ENCODE measurements at regions of chr13 and their contacts with region 1.

Region 1: DNA sequence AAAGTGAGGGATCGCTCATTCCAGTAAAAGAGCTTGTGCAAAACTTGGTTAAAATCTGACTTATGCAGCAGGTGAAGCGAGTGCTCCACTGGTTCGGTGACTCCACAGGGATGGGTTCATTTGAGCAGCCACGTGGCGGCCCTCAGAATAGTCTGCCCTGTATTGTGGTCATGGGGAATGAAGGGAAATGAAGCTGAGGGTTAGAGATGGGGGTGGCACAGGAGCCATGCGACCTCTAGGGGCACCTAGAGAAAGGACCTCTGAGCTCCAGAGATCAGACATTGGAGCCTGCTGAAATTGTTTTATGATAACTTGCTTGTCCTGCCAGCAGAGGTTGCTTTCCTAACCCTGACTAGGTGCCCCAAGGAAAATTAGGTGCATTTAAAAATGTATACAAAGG is 26.6 kb downstream of the CBY2 start:
- DNase-seq: peak in 1 of 14 experiments; percentile 1
- ATAC-seq: no peak
- H3K4me3 ChIP-seq: no peak overlapping the region
- H3K4me3 Mint-ChIP-seq: no peak overlapping the region
- H3K27ac ChIP-seq: no peak overlapping the region
- H3K27ac Mint-ChIP-seq: no peak overlapping the region
- H3K4me1 ChIP-seq: no peaks in the 10 kb centered on the region
- H3K4me1 Mint-ChIP-seq: no peaks in the 10 kb centered on the region
- H3K27me3 ChIP-seq: no peaks in the 10 kb centered on the region
- H3K27me3 Mint-ChIP-seq: no peaks in the 10 kb centered on the region
- CTCF ChIP-seq: no peak

Region 2: GRCh38 chr13:45748941-45749759 is 20.4 kb after region 1 on chr13:
- CTCF ChIA-PET with region 1: no interaction called
- POLR2A ChIA-PET with region 1: no interaction called
- intact Hi-C with region 1: no loop called
- DNase-seq: no peak
- ATAC-seq: no peak
- H3K4me3 ChIP-seq: no peak overlapping the region
- H3K4me3 Mint-ChIP-seq: no peak overlapping the region
- H3K27ac ChIP-seq: no peak overlapping the region
- H3K27ac Mint-ChIP-seq: no peak overlapping the region
- H3K4me1 ChIP-seq: no peaks in the 10 kb centered on the region
- H3K4me1 Mint-ChIP-seq: no peaks in the 10 kb centered on the region
- H3K27me3 ChIP-seq: no peaks in the 10 kb centered on the region
- H3K27me3 Mint-ChIP-seq: no peaks in the 10 kb centered on the region
- CTCF ChIP-seq: no peak

Region 3: DNA sequence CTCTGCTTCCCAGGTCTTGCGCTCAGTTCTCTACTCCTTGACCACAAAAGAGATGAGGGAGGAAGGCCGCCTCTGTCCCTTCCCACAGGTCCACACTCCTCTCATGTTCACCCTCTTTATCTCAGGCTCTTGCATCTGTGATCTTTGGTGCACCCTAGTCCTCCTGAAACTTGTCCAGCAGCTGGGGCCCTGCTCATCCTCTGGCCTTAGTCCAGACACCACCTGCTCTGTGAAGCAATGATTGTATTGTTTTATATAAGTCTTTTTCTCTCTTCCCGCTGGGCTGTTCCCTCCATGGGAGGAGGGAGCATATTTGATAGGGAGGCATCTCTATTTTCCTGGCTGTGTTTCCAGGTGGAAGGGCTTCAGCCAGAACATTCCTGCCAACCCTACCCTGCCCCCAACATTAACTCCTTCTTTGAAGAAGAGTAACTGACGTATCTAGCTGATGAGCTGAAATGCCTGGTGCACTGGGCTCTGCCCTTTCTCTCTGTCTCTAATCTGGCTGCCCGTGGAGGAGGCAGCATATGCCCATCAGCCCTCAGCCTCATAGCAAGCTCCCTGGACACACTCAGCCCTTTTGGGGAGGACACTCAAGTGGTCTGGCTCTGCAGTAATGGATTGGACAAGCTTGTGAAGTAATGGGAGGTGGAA is 161.0 kb after region 1 on chr13:
- CTCF ChIA-PET with region 1: no interaction called
- POLR2A ChIA-PET with region 1: no interaction called
- intact Hi-C with region 1: no loop called
- DNase-seq: no peak
- ATAC-seq: no peak
- H3K4me3 ChIP-seq: no peak overlapping the region
- H3K4me3 Mint-ChIP-seq: no peak overlapping the region
- H3K27ac ChIP-seq: no peak overlapping the region
- H3K27ac Mint-ChIP-seq: no peak overlapping the region
- H3K4me1 ChIP-seq: no peaks in the 10 kb centered on the region
- H3K4me1 Mint-ChIP-seq: no peaks in the 10 kb centered on the region
- H3K27me3 ChIP-seq: peaks cover 0 to 2% of the 10 kb centered on the region in 2 experiments
- H3K27me3 Mint-ChIP-seq: no peaks in the 10 kb centered on the region
- CTCF ChIP-seq: no peak

Region 4: DNA sequence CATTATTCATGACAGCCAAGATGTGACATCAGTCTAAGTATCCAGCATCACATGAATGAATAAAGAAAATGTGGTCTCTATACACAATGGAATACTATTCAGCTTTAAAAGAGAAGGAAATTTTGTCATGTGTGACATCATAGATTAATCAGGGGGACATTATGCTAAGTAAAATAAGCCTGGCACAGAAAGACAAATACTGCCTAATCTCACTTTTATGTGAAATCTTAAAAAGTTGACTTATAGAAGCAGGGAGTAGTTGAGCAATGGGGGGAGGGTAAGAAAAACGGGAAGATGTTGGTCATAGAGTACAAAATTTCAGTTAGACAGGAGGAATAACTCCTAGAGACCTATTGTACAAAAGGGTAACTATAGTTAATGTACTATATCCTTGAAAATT is 463.6 kb after region 1 on chr13:
- CTCF ChIA-PET with region 1: no interaction called
- POLR2A ChIA-PET with region 1: no interaction called
- intact Hi-C with region 1: loop called in 1 of 2 experiments (anchors 5 kb)
- DNase-seq: no peak
- ATAC-seq: no peak
- H3K4me3 ChIP-seq: no peak overlapping the region
- H3K4me3 Mint-ChIP-seq: no peak overlapping the region
- H3K27ac ChIP-seq: no peak overlapping the region
- H3K27ac Mint-ChIP-seq: no peak overlapping the region
- H3K4me1 ChIP-seq: no peaks in the 10 kb centered on the region
- H3K4me1 Mint-ChIP-seq: no peaks in the 10 kb centered on the region
- H3K27me3 ChIP-seq: no peaks in the 10 kb centered on the region
- H3K27me3 Mint-ChIP-seq: no peaks in the 10 kb centered on the region
- CTCF ChIP-seq: no peak

Measured in CD4-positive, alpha-beta T cell (primary cell).